Activated CD4-positive, alpha-beta T cell treated with anti-CD3 and anti-CD28 coated beads for 36 hours (primary cell): ENCODE measurements at regions of chr5 and their contacts with region 1.

Region 1: GRCh38 chr5:157180374-157181264 is at the start of gene ITK:
- DNase-seq: peak; percentile 52
- ATAC-seq: peak; percentile 45
- H3K4me3 Mint-ChIP-seq: peak within 1 kb of the TSS; percentile 93
- H3K27ac Mint-ChIP-seq: peak within 1 kb of the TSS; percentile 100
- H3K4me1 Mint-ChIP-seq: peaks cover 43% of the 10 kb centered on the region
- H3K27me3 Mint-ChIP-seq: no peaks in the 10 kb centered on the region
- total RNA-seq, gene ITK: 208 to 249 TPM

Region 2: DNA sequence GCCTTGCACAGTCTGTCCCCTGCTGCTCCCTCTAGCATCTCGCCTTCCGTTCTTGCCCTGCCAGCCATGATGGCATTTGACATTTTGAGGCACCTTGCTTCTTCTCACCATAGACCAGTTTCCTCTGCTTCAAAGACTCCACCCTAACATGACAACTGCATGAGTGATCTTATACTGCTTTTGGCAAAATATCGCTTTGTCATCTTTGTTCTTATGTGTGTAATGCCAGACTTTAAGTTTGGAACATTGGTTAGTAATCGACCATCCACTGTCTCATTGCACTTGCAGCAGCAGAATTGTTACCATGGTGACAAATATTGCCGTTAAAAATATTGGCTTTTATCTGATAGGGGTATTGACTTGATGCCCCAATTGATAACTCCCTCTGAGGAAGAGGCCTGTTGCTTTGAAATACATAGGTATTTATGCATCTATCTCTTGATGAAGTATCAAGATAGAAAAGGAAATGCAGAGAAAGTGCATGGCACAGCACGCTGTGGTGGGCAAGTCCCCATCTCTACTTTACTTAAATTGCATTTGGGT is 21.3 kb before region 1 on chr5:
- CTCF ChIA-PET with region 1: interaction called, 6 read pairs
- POLR2A ChIA-PET with region 1: no interaction called
- intact Hi-C with region 1: loop called (anchors 1 kb)
- DNase-seq: peak; percentile 66
- ATAC-seq: peak; percentile 81
- H3K4me3 Mint-ChIP-seq: peak overlapping the region; percentile 64
- H3K27ac Mint-ChIP-seq: peak overlapping the region; percentile 99
- H3K4me1 Mint-ChIP-seq: peaks cover 71% of the 10 kb centered on the region
- H3K27me3 Mint-ChIP-seq: no peaks in the 10 kb centered on the region

Region 3: GRCh38 chr5:157167214-157167621 is 13.4 kb before region 1 on chr5:
- CTCF ChIA-PET with region 1: interaction called, 33 read pairs
- POLR2A ChIA-PET with region 1: interaction called, 8 read pairs
- intact Hi-C with region 1: loop called (anchors 1 kb)
- DNase-seq: no peak
- ATAC-seq: peak; percentile 74
- H3K4me3 Mint-ChIP-seq: peak overlapping the region; percentile 47
- H3K27ac Mint-ChIP-seq: peak overlapping the region; percentile 88
- H3K4me1 Mint-ChIP-seq: peaks cover 76% of the 10 kb centered on the region
- H3K27me3 Mint-ChIP-seq: no peaks in the 10 kb centered on the region

Region 4: GRCh38 chr5:157198277-157198986 is 17.8 kb after region 1 on chr5:
- CTCF ChIA-PET with region 1: interaction called, 10 read pairs
- POLR2A ChIA-PET with region 1: interaction called, 4 read pairs
- intact Hi-C with region 1: loop called in 1 of 2 experiments (anchors 1 kb)
- DNase-seq: peak; percentile 75
- ATAC-seq: peak; percentile 78
- H3K4me3 Mint-ChIP-seq: peak overlapping the region; percentile 66
- H3K27ac Mint-ChIP-seq: peak overlapping the region; percentile 98
- H3K4me1 Mint-ChIP-seq: peaks cover 94% of the 10 kb centered on the region
- H3K27me3 Mint-ChIP-seq: no peaks in the 10 kb centered on the region

Region 5: DNA sequence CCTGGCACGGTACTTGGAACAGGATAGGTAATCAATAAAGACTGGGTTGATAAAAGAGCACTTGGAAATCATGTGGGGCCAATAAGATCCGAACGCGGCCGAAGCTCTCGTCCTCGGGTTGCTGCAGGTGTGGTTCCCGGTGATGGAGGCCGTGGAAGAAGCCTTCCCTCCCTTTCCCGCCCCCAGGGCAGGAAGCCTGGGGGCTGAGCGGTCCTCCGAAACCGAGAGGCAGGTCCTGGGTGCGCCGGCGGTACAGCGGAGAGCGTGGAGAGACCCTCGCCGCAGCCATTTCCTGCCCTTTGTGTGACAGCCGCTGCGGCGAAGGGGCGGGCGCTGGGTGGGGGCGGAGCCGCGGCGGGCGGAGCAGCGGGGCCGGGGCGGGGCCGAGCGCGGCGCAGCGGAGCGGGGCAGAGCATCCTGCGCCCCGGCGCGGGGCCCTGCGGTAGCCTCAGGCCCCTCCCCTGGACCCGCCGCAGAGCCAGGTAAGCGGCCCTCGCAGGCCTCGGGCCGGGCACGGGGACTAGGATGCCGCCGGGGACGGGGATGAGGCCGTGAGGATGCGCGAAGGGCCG is 85.2 kb after region 1 on chr5 and contains the start of gene CYFIP2:
- CTCF ChIA-PET with region 1: interaction called, 6 read pairs
- POLR2A ChIA-PET with region 1: no interaction called
- intact Hi-C with region 1: loop called in 1 of 2 experiments (anchors 2 kb)
- DNase-seq: peak; percentile 91
- ATAC-seq: peak; percentile 78
- H3K4me3 Mint-ChIP-seq: peak within 1 kb of the TSS; percentile 96
- H3K27ac Mint-ChIP-seq: peak within 1 kb of the TSS; percentile 98
- H3K4me1 Mint-ChIP-seq: peaks cover 68% of the 10 kb centered on the region
- H3K27me3 Mint-ChIP-seq: no peaks in the 10 kb centered on the region
- total RNA-seq, gene CYFIP2: 277 to 526 TPM